HepG2 (cell line): ENCODE measurements at regions of chr6 and their contacts with region 1.

Region 1: DNA sequence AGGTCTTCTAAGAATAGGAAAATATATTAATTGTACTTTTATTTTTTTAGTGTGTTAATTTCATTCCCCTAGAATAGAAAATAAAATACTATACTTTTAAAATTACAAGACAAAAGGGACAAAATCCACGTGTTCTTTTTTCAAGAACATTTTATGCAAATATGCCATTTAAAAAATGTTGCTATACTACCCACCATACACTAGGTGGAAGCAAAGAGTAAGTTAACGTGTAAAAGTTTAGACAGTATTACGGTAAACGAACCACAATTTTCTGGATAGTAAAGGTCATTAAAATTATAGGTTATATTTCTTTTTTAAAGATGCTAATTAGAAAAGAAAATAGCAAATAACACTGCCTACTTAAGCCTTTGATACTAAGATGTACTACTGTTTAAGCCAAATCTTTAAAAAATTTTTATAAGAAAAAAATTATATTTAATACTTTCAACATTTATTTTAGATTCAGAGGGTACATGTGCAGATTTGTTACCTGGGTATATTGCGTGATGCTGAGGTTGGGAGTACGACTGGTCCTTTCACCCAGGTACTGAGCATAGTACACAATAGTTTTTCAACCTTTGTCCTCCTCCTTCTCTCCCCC is 287.6 kb downstream of the PHF3 start:
- DNase-seq: peak; percentile 52
- ATAC-seq: peak; percentile 38; the same call in 2 of the 3 replicates
- H3K4me3 ChIP-seq: no peak overlapping the region
- H3K27ac ChIP-seq: no peak overlapping the region
- H3K4me1 ChIP-seq: peaks cover 12% of the 10 kb centered on the region
- H3K27me3 ChIP-seq: no peaks in the 10 kb centered on the region; a peak in 1 of 5 replicates
- CTCF ChIP-seq: peak; percentile 73
- EP300 ChIP-seq: no peak
- POLR2A ChIP-seq: no peak
- RAD21 ChIP-seq: peak; percentile 48; the same call in 1 of the 2 replicates

Region 2: DNA sequence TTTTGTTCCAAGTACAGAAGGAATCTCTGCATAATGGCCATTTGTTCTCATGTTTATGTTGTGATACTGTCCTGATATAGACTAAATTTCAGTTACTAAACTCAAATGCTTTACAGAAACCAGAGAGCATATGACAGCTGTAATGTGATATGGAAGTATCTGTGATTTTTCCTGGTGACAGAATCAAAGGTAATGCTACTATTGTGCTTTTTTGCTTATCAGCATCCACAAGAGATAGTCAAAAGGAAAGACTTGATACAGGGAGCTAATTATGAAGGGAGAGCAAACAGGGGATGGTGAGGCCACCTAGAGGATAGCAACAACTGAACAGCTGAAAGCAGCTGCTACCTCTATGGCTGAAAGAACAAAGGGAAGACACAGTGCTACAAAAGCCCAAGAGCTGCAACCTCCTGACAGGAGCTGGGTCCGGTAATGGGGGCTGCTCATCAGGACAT is 106.2 kb before region 1 on chr6:
- CTCF ChIA-PET with region 1: no interaction called
- POLR2A ChIA-PET with region 1: no interaction called
- in situ Hi-C with region 1: no loop called
- intact Hi-C with region 1: no loop called
- DNase-seq: peak; percentile 25
- ATAC-seq: peak; percentile 98
- H3K4me3 ChIP-seq: no peak overlapping the region
- H3K27ac ChIP-seq: no peak overlapping the region
- H3K4me1 ChIP-seq: no peaks in the 10 kb centered on the region
- H3K27me3 ChIP-seq: no peaks in the 10 kb centered on the region
- CTCF ChIP-seq: peak; percentile 55
- EP300 ChIP-seq: no peak
- POLR2A ChIP-seq: no peak
- RAD21 ChIP-seq: no peak

Region 3: DNA sequence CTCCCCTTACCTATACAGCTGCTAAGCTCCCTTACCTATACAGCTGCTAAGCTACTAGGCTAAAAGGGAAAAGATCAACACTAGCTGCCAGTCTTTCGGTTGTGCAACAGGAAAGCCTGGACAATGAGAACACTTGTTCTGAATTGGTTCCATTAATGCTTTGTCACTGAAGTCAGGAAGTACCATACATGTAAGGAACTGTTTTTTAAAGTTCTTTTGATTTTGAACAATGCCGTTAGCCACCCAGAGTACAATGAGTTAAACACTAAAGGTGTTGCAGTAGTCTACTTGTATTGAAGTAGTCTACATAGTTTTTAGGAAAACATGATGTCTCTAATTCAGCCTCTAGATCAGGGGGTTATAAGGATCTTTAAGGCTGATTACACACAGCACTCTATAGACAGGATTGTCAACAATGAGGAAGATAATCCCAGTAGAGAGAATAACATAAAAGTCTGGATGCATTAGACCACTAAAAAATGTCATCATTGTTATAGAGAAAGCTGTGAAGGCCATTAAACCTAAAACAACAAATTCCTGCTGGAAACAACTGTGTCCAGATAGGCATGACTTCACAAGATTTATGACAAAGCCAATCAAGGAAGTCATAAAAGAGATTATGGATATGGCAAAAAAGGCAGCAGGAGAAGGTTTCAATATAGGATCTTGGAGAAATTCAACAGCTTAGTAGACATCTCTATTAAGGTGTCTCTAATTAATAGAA is 18.7 kb after region 1 on chr6:
- CTCF ChIA-PET with region 1: no interaction called
- POLR2A ChIA-PET with region 1: no interaction called
- in situ Hi-C with region 1: no loop called
- intact Hi-C with region 1: loop called (anchors 2 kb)
- DNase-seq: peak; percentile 94
- ATAC-seq: peak; percentile 99
- H3K4me3 ChIP-seq: no peak overlapping the region
- H3K27ac ChIP-seq: peak overlapping the region; percentile 35
- H3K4me1 ChIP-seq: peaks cover 29% of the 10 kb centered on the region
- H3K27me3 ChIP-seq: no peaks in the 10 kb centered on the region
- CTCF ChIP-seq: 0 out of 2 replicates have a peak, but pooled peaks have one; percentile 5
- EP300 ChIP-seq: peak; percentile 46 to 80; a peak in 2 of 4 replicates
- POLR2A ChIP-seq: no peak
- RAD21 ChIP-seq: no peak

Region 4: DNA sequence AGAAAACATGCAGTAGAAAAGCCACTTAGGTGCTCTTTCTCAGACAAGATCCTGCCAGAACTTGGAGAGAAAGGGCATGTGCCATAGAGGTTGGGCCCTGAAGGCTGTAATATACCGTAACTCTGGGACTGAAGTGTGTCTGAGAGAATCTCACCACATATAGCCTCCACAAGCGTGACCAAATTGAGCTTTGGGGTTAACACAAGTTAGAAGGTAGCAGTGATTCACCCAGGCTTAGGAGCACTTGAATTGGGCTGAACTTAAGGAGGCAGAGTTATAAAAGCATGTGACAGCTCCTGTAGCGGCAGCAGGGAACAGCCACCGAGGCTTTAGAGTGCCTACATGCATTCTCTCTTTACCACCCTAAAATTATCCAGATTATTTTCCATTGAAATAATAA is 74.0 kb after region 1 on chr6:
- CTCF ChIA-PET with region 1: no interaction called
- POLR2A ChIA-PET with region 1: no interaction called
- in situ Hi-C with region 1: no loop called
- intact Hi-C with region 1: loop called (anchors 5 kb)
- DNase-seq: no peak
- ATAC-seq: no peak
- H3K4me3 ChIP-seq: no peak overlapping the region
- H3K27ac ChIP-seq: no peak overlapping the region
- H3K4me1 ChIP-seq: no peaks in the 10 kb centered on the region
- H3K27me3 ChIP-seq: no peaks in the 10 kb centered on the region
- CTCF ChIP-seq: no peak
- EP300 ChIP-seq: no peak
- POLR2A ChIP-seq: no peak
- RAD21 ChIP-seq: no peak

Region 5: DNA sequence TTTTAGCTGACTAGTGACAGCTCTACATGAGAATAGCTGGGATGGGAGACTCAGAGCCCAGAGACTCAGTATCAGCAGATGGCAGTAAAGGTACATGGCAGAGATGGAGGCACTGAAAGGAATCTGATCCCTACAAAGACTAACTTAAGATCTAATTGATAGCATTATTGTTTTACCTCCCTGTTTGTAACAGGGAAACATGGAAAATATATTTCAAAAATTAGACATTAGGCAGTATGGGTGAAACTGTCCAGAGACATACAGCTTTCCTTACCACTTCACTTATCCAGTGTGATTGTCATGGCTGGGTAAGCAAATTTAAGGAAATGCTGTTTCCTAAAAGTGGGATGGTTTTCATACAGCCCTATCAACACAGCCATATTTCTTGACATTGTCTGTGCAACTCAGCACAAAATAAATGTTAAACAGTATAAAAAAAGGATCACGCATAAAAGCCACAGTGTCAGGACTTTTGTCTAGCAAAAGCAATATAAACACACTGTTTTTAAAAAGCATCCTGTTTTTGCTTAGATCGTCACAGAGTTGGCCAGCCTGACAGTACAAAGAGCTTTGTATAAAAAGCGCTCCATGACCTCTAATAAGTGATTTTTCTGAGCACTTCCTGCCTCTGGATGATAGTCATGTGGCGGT is 89.2 kb after region 1 on chr6:
- CTCF ChIA-PET with region 1: no interaction called
- POLR2A ChIA-PET with region 1: no interaction called
- in situ Hi-C with region 1: no loop called
- intact Hi-C with region 1: loop called (anchors 1 kb)
- DNase-seq: peak; percentile 61
- ATAC-seq: peak; percentile 99
- H3K4me3 ChIP-seq: no peak overlapping the region
- H3K27ac ChIP-seq: no peak overlapping the region
- H3K4me1 ChIP-seq: no peaks in the 10 kb centered on the region
- H3K27me3 ChIP-seq: no peaks in the 10 kb centered on the region; a peak in 1 of 5 replicates
- CTCF ChIP-seq: peak; percentile 93
- EP300 ChIP-seq: no peak
- POLR2A ChIP-seq: no peak
- RAD21 ChIP-seq: peak; percentile 93

Region 6: GRCh38 chr6:64084185-64084663 is 161.0 kb after region 1 on chr6:
- CTCF ChIA-PET with region 1: no interaction called
- POLR2A ChIA-PET with region 1: no interaction called
- in situ Hi-C with region 1: no loop called
- intact Hi-C with region 1: loop called (anchors 5 kb)
- DNase-seq: peak; percentile 86
- ATAC-seq: peak; percentile 95
- H3K4me3 ChIP-seq: no peak overlapping the region
- H3K27ac ChIP-seq: no peak overlapping the region
- H3K4me1 ChIP-seq: peaks cover 18% of the 10 kb centered on the region
- H3K27me3 ChIP-seq: peaks cover 0 to 5% of the 10 kb centered on the region in 2 experiments; a peak in 1 of 5 replicates
- CTCF ChIP-seq: peak; percentile 52
- EP300 ChIP-seq: peak in 1 of 2 experiments; percentile 58; a peak in 1 of 4 replicates
- POLR2A ChIP-seq: no peak
- RAD21 ChIP-seq: no peak

Region 7: GRCh38 chr6:64325093-64325492 is 401.9 kb after region 1 on chr6:
- CTCF ChIA-PET with region 1: no interaction called
- POLR2A ChIA-PET with region 1: no interaction called
- in situ Hi-C with region 1: loop called (anchors 10 kb)
- intact Hi-C with region 1: no loop called
- DNase-seq: no peak
- ATAC-seq: no peak
- H3K4me3 ChIP-seq: no peak overlapping the region
- H3K27ac ChIP-seq: no peak overlapping the region
- H3K4me1 ChIP-seq: no peaks in the 10 kb centered on the region
- H3K27me3 ChIP-seq: no peaks in the 10 kb centered on the region
- CTCF ChIP-seq: no peak
- EP300 ChIP-seq: no peak
- POLR2A ChIP-seq: no peak
- RAD21 ChIP-seq: no peak

Region 8: GRCh38 chr6:64330694-64331307 is 407.6 kb after region 1 on chr6:
- CTCF ChIA-PET with region 1: interaction called, 11 read pairs
- POLR2A ChIA-PET with region 1: no interaction called
- in situ Hi-C with region 1: loop called (anchors 10 kb)
- intact Hi-C with region 1: loop called (anchors 1 kb)
- DNase-seq: peak; percentile 55
- ATAC-seq: peak; percentile 87
- H3K4me3 ChIP-seq: no peak overlapping the region
- H3K27ac ChIP-seq: no peak overlapping the region
- H3K4me1 ChIP-seq: no peaks in the 10 kb centered on the region
- H3K27me3 ChIP-seq: no peaks in the 10 kb centered on the region
- CTCF ChIP-seq: peak; percentile 93
- EP300 ChIP-seq: no peak
- POLR2A ChIP-seq: no peak
- RAD21 ChIP-seq: peak; percentile 73